ENCODE measurements at regions of chr11 and their contacts with region 1.

Region 1: DNA sequence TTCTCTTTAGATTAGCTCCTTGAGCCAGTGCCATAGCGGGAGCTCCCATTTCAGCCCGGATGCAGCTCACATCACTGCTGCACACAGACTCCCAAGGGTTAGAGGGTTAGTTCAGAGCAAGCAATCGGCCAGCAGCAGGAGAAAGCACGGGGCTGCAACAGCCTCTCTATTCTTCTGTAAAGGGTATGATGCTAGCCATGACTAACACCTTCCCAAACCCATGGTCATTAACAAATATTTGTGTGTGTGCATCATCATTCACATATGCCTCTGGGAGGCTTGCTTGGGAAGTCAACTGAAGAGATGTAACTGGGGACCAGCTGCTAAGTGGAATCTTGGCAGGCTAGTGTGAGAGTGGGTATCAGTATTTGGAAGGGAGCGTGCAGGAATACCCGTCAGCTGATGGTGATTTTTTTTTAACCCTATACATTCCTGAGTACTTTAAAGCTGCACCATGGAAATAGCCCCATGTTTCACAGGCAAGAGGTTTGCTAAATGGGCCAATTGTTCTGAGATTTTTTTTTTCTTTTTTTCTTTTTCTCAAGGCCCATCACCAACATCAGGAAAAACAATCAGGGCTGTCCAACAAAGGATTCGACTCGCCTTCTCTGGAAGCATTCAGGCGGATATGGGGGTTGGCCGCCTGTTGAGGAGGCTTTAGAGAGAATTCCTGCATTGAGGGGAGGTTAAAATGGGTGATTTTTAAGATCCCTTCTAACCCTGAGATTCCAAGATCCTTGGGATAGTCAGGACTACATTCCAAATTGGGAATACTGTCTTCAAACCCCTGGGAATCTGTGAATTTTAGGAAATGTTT is 33.2 kb upstream of the CCDC89 start:
- DNase-seq: no peak
- ATAC-seq: peak; percentile 88

Region 2: GRCh38 chr11:85699957-85700741 is 19.1 kb before region 1 on chr11:
- intact Hi-C with region 1: loop called (anchors 1 kb)
- DNase-seq: no peak
- ATAC-seq: no peak